Natural killer cell (primary cell): ENCODE measurements at regions of chr1 and their contacts with region 1.

Region 1: GRCh38 chr1:170074250-170075157 is at the start of gene KIFAP3:
- DNase-seq: peak; percentile 92 to 99
- ATAC-seq: peak; percentile 92 to 98 (median 94)
- H3K4me3 ChIP-seq: peak within 1 kb of the TSS; percentile 65
- H3K4me3 Mint-ChIP-seq: peak within 1 kb of the TSS; percentile 92
- H3K27ac ChIP-seq: peak within 1 kb of the TSS; percentile 89
- H3K27ac Mint-ChIP-seq: peak within 1 kb of the TSS; percentile 95 to 98
- H3K4me1 ChIP-seq: peaks cover 9% of the 10 kb centered on the region
- H3K4me1 Mint-ChIP-seq: peaks cover 51 to 55% of the 10 kb centered on the region in 2 donors
- H3K27me3 ChIP-seq: no peaks in the 10 kb centered on the region
- H3K27me3 Mint-ChIP-seq: peaks cover 0 to 3% of the 10 kb centered on the region in 2 donors
- CTCF ChIP-seq: no peak
- total RNA-seq, gene KIFAP3: 31.0 to 34.3 (median 33.7) TPM

Region 2: DNA sequence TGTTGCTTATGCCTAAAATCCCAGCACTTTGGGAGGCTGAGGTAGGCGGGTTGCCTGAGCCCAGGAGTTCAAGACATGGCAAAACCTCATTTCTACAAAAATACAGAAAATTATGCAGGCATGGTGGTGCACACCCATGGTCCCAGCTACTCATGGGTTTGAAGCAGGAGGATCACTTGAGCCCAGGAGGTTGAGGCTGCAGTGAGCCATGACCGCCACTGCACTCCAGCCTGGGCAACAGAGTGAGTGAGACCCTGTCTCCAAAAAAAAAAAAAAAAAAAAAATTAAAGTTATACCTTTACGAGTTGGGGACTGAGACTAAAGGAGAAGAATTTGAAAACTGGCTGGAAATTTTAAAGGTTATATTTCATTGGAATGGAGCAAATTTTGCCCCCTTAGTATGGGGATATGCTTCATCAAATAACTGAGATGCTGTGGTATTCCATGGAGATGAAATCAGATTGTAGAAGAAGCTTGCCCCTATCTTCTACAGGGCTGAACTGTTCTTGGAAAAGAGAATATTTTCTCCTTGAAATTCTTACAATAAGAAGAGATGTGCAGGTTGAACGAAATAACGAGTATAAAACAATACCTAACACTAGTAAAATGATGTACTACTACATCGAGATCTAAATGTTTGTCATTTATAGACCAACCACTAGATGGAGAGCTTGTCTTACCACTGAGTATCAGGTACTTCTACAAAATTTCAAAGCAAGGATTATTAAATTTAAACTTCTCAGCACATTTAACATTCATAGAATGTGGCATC is 145.9 kb before region 1 on chr1:
- intact Hi-C with region 1: loop called (anchors 1 kb)
- DNase-seq: peak in 1 of 2 donors; percentile 67
- ATAC-seq: peak; percentile 74 to 79 (median 77)
- H3K4me3 ChIP-seq: no peak overlapping the region
- H3K4me3 Mint-ChIP-seq: no peak overlapping the region
- H3K27ac ChIP-seq: no peak overlapping the region
- H3K27ac Mint-ChIP-seq: no peak overlapping the region
- H3K4me1 ChIP-seq: no peaks in the 10 kb centered on the region
- H3K4me1 Mint-ChIP-seq: peaks cover 0 to 14% of the 10 kb centered on the region in 2 donors
- H3K27me3 ChIP-seq: no peaks in the 10 kb centered on the region
- H3K27me3 Mint-ChIP-seq: no peaks in the 10 kb centered on the region
- CTCF ChIP-seq: peak; percentile 90

Region 3: DNA sequence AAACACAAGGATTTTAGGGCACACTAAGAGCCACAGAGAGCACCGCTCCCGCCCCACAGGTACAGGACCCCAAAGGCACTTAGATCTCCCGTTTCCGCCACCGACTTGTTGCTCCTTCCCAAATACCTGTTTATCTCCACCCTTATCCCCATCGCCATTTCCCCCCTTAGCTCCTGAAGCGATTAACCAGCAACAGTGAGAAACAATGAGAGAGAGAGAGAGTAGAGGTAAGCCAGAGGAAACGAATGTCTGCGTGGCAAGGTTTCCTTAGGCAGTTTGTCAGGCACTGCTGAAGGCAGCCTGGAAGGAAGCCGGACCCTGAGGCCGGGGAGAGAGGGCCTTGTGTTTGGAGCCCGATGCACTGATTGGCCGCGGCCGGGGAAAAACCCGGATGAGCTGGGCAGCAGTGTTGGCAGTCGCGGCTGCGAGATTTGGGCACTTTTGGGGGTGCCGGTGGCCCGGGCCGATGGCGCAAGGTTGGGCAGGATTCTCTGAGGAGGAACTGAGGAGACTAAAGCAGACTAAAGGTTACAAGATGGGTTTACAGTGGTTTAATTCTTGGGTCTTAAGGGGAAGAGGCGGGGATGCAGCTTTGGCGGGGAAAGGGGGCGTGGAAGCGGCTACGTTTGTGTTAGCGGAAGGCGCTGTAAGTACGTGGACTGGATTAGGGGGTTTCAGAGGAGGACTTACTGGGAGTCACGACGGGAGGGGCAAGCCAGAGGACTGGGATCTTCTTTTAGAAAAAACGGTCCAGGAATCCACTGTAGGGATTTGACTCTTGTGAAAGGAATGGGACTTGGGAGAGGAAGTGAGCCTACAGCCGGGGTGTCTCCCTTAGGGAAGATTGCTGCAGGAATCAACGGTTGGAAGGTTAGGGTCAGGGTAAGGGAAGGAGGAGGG is 457.5 kb after region 1 on chr1 and contains the start of gene GORAB:
- intact Hi-C with region 1: loop called (anchors 5 kb)
- DNase-seq: peak; percentile 83 to 91
- ATAC-seq: peak; percentile 95 to 96 (median 96)
- H3K4me3 ChIP-seq: peak within 1 kb of the TSS; percentile 65
- H3K4me3 Mint-ChIP-seq: no peak within 1 kb of the TSS
- H3K27ac ChIP-seq: peak within 1 kb of the TSS; percentile 79
- H3K27ac Mint-ChIP-seq: no peak within 1 kb of the TSS
- H3K4me1 ChIP-seq: peaks cover 5% of the 10 kb centered on the region
- H3K4me1 Mint-ChIP-seq: peaks cover 6 to 11% of the 10 kb centered on the region in 2 donors
- H3K27me3 ChIP-seq: peaks cover 2% of the 10 kb centered on the region
- H3K27me3 Mint-ChIP-seq: peaks cover 0 to 7% of the 10 kb centered on the region in 2 donors
- CTCF ChIP-seq: no peak
- total RNA-seq, gene GORAB: 17.4 to 23.6 (median 20.8) TPM